CD4-positive, alpha-beta memory T cell (primary cell): ENCODE measurements at regions of chrX and their contacts with region 1.

Region 1: DNA sequence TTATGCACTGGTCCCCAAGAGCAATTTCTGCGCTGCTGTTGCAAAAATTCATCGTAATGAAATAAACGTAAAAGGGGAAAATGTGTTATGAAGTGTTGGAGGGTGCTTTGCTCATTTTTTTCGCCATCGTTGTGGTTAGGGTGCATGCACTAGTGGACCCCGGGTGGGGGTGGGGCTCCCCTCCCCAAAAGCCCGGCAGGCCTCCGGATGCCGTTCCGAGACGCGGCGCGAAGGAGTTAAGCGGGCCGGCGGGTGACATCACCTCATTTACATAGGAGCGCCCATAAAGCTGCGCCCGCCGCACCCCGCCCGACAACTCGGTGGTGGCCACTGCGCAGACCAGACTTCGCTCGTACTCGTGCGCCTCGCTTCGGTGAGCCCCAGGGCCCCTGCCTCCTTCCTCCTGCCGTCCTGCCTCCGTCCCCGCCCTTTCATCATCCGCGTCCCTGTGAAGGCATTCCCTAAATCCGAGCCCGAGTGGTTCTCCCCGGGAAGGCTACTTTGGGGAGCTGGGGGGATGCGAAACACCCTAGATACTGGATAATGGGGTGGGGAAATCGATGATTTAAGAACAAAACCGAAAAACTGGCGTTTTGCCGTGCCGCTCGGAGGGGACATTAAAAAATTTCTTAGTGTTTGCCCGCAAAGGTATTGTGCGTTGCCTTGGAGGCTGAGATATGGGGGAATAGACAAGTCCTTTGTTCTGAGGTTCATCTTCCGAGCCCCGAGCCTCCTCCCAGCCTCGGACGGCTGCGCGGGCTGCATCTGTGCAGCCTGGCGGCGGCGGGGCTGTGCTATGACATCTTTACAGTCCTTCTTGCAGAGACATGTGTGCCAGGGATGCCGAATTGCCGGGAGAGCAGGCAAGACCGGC is at the start of gene TMSB4X:
- DNase-seq: peak; percentile 81 to 85 (median 83)
- H3K4me3 ChIP-seq: peak within 1 kb of the TSS; percentile 84 to 85
- H3K4me3 Mint-ChIP-seq: peak within 1 kb of the TSS; percentile 92 to 99 (median 98)
- H3K27ac ChIP-seq: peak within 1 kb of the TSS; percentile 84
- H3K27ac Mint-ChIP-seq: peak within 1 kb of the TSS; percentile 89 to 99 (median 97)
- H3K4me1 ChIP-seq: peaks cover 26% of the 10 kb centered on the region
- H3K4me1 Mint-ChIP-seq: peaks cover 16 to 57% (median 38%) of the 10 kb centered on the region in 4 donors
- H3K27me3 ChIP-seq: no peaks in the 10 kb centered on the region
- H3K27me3 Mint-ChIP-seq: no peaks in the 10 kb centered on the region
- total RNA-seq, gene TMSB4X: 4,851 to 5,116 TPM

Region 2: DNA sequence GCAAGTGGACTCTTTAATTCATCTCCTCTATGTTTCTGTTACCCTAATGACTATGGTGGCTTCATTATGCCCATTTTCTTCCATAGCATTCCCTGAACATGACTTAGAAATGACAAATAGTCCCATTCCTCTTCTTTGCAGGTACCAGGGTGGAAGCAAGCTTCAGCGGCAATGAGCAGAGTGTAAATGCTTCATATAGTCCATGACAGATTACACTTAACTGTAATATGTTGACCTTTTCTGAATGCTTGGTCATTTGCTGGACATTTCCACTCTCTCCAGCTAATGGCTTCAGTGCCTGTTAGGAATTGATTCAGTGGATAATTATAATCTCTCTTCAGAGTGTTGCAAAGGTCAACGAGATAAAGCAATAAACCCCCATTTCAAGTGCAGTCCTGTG is 313.6 kb before region 1 on chrX:
- CTCF ChIA-PET with region 1: no interaction called
- POLR2A ChIA-PET with region 1: no interaction called
- intact Hi-C with region 1: no loop called
- DNase-seq: no peak
- H3K4me3 ChIP-seq: no peak overlapping the region
- H3K4me3 Mint-ChIP-seq: no peak overlapping the region
- H3K27ac ChIP-seq: no peak overlapping the region
- H3K27ac Mint-ChIP-seq: no peak overlapping the region
- H3K4me1 ChIP-seq: no peaks in the 10 kb centered on the region
- H3K4me1 Mint-ChIP-seq: no peaks in the 10 kb centered on the region
- H3K27me3 ChIP-seq: no peaks in the 10 kb centered on the region
- H3K27me3 Mint-ChIP-seq: no peaks in the 10 kb centered on the region

Region 3: GRCh38 chrX:12994276-12994675 is 19.2 kb after region 1 on chrX:
- CTCF ChIA-PET with region 1: interaction called, 5 read pairs
- POLR2A ChIA-PET with region 1: interaction called, 426 read pairs
- intact Hi-C with region 1: loop called (anchors 1 kb)
- DNase-seq: no peak
- H3K4me3 ChIP-seq: no peak overlapping the region
- H3K4me3 Mint-ChIP-seq: no peak overlapping the region
- H3K27ac ChIP-seq: no peak overlapping the region
- H3K27ac Mint-ChIP-seq: peak overlapping the region in 2 of 7 donors; percentile 47 to 81
- H3K4me1 ChIP-seq: peaks cover 48% of the 10 kb centered on the region
- H3K4me1 Mint-ChIP-seq: peaks cover 29 to 58% (median 41%) of the 10 kb centered on the region in 4 donors
- H3K27me3 ChIP-seq: no peaks in the 10 kb centered on the region
- H3K27me3 Mint-ChIP-seq: no peaks in the 10 kb centered on the region

Region 4: DNA sequence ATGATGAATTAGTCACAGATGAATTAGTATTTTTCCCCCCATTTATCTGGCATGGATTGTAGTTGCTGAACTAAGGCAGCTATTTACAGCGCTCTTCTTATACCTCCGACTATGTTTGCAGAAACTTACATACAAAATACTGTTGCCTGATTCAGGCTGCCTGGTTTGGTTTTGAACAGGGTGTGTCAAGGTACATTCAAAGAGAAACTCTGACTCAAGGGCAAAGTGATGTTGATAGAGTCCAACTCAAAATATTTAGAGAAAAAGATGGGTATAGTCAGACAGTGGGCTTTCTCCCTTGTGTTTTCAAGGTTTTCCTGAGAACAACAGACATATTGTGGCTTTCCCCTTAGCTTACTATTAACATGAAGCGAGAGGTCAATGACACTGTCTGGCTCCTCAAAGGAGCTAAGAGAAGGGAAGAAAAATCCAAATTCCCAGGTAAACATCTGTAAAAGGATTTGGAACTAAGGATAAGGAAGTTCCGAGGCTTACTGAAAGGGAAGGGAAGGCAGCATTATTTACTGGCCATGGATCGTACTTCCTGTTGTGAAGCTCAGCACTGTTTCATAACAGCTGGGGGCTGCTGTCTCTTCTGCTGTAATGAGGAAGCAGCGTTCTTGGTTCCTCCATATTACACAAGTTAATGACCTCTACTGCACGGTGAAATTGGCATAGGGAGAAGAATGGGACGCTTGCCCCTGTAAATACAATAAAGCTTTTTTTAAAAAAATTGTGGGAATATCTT is 38.5 kb after region 1 on chrX:
- CTCF ChIA-PET with region 1: interaction called, 3 read pairs
- POLR2A ChIA-PET with region 1: interaction called, 383 read pairs
- intact Hi-C with region 1: loop called (anchors 5 kb)
- DNase-seq: peak in 2 of 5 donors; percentile 19 to 23
- H3K4me3 ChIP-seq: no peak overlapping the region
- H3K4me3 Mint-ChIP-seq: peak overlapping the region; percentile 6 to 44 (median 20)
- H3K27ac ChIP-seq: peak overlapping the region; percentile 61
- H3K27ac Mint-ChIP-seq: peak overlapping the region; percentile 56 to 93 (median 80)
- H3K4me1 ChIP-seq: peaks cover 56% of the 10 kb centered on the region
- H3K4me1 Mint-ChIP-seq: peaks cover 36 to 72% (median 53%) of the 10 kb centered on the region in 4 donors
- H3K27me3 ChIP-seq: no peaks in the 10 kb centered on the region
- H3K27me3 Mint-ChIP-seq: no peaks in the 10 kb centered on the region

Region 5: GRCh38 chrX:13043144-13043543 is 68.1 kb after region 1 on chrX:
- CTCF ChIA-PET with region 1: no interaction called
- POLR2A ChIA-PET with region 1: interaction called, 220 read pairs
- intact Hi-C with region 1: no loop called
- DNase-seq: no peak
- H3K4me3 ChIP-seq: no peak overlapping the region
- H3K4me3 Mint-ChIP-seq: no peak overlapping the region
- H3K27ac ChIP-seq: no peak overlapping the region
- H3K27ac Mint-ChIP-seq: no peak overlapping the region
- H3K4me1 ChIP-seq: peaks cover 31% of the 10 kb centered on the region
- H3K4me1 Mint-ChIP-seq: peaks cover 14 to 45% (median 27%) of the 10 kb centered on the region in 4 donors
- H3K27me3 ChIP-seq: no peaks in the 10 kb centered on the region
- H3K27me3 Mint-ChIP-seq: no peaks in the 10 kb centered on the region

Region 6: GRCh38 chrX:13064599-13065143 is 89.6 kb after region 1 on chrX:
- CTCF ChIA-PET with region 1: no interaction called
- POLR2A ChIA-PET with region 1: interaction called, 27 read pairs
- intact Hi-C with region 1: no loop called
- DNase-seq: no peak
- H3K4me3 ChIP-seq: no peak overlapping the region
- H3K4me3 Mint-ChIP-seq: no peak overlapping the region
- H3K27ac ChIP-seq: no peak overlapping the region
- H3K27ac Mint-ChIP-seq: no peak overlapping the region
- H3K4me1 ChIP-seq: peaks cover 21% of the 10 kb centered on the region
- H3K4me1 Mint-ChIP-seq: peaks cover 22 to 45% (median 29%) of the 10 kb centered on the region in 4 donors
- H3K27me3 ChIP-seq: no peaks in the 10 kb centered on the region
- H3K27me3 Mint-ChIP-seq: no peaks in the 10 kb centered on the region

Region 7: GRCh38 chrX:13487731-13488523 is 512.9 kb after region 1 on chrX:
- CTCF ChIA-PET with region 1: interaction called, 11 read pairs
- POLR2A ChIA-PET with region 1: interaction called, 20 read pairs
- intact Hi-C with region 1: no loop called
- DNase-seq: peak; percentile 45 to 65 (median 58)
- H3K4me3 ChIP-seq: no peak overlapping the region
- H3K4me3 Mint-ChIP-seq: peak overlapping the region in 2 of 8 donors; percentile 38 to 58
- H3K27ac ChIP-seq: no peak overlapping the region
- H3K27ac Mint-ChIP-seq: peak overlapping the region; percentile 57 to 89 (median 70)
- H3K4me1 ChIP-seq: peaks cover 12% of the 10 kb centered on the region
- H3K4me1 Mint-ChIP-seq: peaks cover 7 to 15% (median 13%) of the 10 kb centered on the region in 4 donors
- H3K27me3 ChIP-seq: no peaks in the 10 kb centered on the region
- H3K27me3 Mint-ChIP-seq: no peaks in the 10 kb centered on the region